Activated CD4-positive, alpha-beta T cell treated with anti-CD3 and anti-CD28 coated beads for 36 hours (primary cell): ENCODE measurements at regions of chr15 and their contacts with region 1.

Region 1: DNA sequence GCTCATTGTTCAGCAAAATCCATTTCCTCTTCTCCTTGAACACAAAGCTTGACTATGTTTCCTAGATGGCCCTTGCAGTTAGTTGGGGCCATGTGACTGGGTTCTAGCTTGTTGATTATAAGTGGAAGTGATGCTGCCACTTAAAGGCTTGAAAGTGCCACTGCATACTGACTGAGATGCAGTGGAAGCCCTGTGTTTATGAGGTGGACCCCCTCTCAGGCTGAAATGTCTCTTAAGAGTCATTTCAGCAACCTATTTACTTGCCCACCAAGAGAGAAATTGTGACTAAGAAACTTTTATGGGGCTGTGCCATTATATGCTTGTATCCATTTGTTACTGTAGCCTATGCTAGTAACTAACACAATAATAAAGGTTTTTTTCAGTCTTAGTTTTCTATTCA is 8.4 kb upstream of the ANP32A start:
- DNase-seq: peak; percentile 38
- ATAC-seq: peak; percentile 93
- H3K4me3 Mint-ChIP-seq: no peak overlapping the region
- H3K27ac Mint-ChIP-seq: no peak overlapping the region
- H3K4me1 Mint-ChIP-seq: peaks cover 18% of the 10 kb centered on the region
- H3K27me3 Mint-ChIP-seq: peaks cover 4% of the 10 kb centered on the region

Region 2: DNA sequence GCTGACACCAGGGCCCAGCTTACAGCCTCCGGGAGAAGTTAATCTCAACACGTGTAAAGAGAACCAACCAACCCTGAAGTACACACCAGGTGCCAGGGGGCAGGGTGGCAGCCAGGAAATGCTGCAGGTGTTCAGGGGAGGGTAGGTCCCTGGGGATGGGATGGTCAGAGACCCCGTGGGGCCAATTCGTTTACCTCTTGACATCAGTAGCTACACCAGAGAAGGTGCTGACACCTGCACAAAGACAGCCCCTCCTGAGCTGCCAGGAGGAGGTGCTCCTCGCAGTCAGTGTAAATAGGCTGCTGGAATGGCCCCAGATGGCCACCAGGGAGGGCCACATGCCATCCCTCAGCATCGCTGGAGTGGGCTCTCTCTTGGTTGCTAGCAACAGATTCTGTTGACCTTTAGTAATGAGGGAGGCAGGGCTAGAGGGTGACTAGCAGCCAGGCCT is 197.4 kb before region 1 on chr15:
- CTCF ChIA-PET with region 1: no interaction called
- POLR2A ChIA-PET with region 1: no interaction called
- intact Hi-C with region 1: no loop called
- DNase-seq: no peak
- ATAC-seq: no peak
- H3K4me3 Mint-ChIP-seq: no peak overlapping the region
- H3K27ac Mint-ChIP-seq: no peak overlapping the region
- H3K4me1 Mint-ChIP-seq: no peaks in the 10 kb centered on the region
- H3K27me3 Mint-ChIP-seq: peaks cover 2% of the 10 kb centered on the region

Region 3: GRCh38 chr15:68730471-68730919 is 98.6 kb before region 1 on chr15:
- CTCF ChIA-PET with region 1: interaction called, 6 read pairs
- POLR2A ChIA-PET with region 1: no interaction called
- intact Hi-C with region 1: loop called (anchors 1 to 2 kb)
- DNase-seq: peak; percentile 43
- ATAC-seq: no peak
- H3K4me3 Mint-ChIP-seq: no peak overlapping the region
- H3K27ac Mint-ChIP-seq: no peak overlapping the region
- H3K4me1 Mint-ChIP-seq: no peaks in the 10 kb centered on the region
- H3K27me3 Mint-ChIP-seq: peaks cover 4% of the 10 kb centered on the region

Region 4: DNA sequence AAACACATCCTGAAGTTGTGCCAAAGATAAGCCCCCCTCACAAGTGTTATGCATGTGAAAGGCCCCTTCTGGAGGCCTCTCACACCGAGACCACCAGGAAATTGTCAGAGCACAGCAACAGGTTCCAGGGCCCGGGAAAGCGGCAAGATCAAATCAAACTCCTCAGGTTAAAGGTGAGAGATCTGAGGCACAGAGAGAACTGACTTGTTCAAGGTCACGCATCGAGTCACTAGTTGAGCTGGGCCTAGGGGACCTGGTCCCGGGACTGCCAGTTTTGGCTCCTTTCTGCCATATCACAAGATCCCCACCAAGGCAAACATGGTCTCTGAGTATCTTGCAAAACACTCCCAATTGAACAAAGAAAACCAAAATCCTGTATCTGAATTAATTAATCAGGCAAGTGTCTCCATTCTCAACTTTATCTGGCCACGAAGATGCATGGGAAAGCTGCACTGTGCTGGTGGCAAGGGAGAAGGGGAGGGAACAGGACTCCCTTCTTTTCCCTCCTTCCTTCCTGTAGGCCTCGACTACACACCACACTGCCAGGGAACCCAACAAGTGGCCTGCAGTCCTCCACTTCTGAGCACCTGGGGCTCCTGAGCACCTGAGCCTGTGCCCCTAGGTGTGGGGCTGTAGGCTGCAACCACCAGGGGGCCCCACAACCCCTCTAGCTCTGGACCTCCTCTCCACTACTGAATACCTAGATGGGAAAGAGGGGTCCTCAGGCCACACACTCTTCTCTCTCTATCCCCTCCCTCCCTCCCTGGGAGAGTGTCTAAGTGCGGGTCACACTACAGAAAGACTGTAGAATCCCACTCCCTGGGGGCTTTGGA is 45.6 kb before region 1 on chr15:
- CTCF ChIA-PET with region 1: interaction called, 8 read pairs
- POLR2A ChIA-PET with region 1: no interaction called
- intact Hi-C with region 1: loop called (anchors 1 kb)
- DNase-seq: peak; percentile 78
- ATAC-seq: peak; percentile 52
- H3K4me3 Mint-ChIP-seq: peak overlapping the region; percentile 27
- H3K27ac Mint-ChIP-seq: peak overlapping the region; percentile 86
- H3K4me1 Mint-ChIP-seq: peaks cover 33% of the 10 kb centered on the region
- H3K27me3 Mint-ChIP-seq: no peaks in the 10 kb centered on the region